ENCODE measurements at regions of chr1 and their contacts with region 1.

Region 1: GRCh38 chr1:153749408-153750005 is 21.7 kb downstream of the INTS3 start:
- DNase-seq: peak; percentile 85
- H3K4me3 Mint-ChIP-seq: no peak overlapping the region
- H3K27ac Mint-ChIP-seq: no peak overlapping the region
- H3K4me1 Mint-ChIP-seq: no peaks in the 10 kb centered on the region
- H3K27me3 Mint-ChIP-seq: no peaks in the 10 kb centered on the region
- CTCF ChIP-seq: peak; percentile 88

Region 2: GRCh38 chr1:153677718-153678505 is 71.6 kb before region 1 on chr1:
- CTCF ChIA-PET with region 1: no interaction called
- intact Hi-C with region 1: loop called (anchors 1 kb)
- DNase-seq: peak; percentile 66
- H3K4me3 Mint-ChIP-seq: peak overlapping the region; percentile 71
- H3K27ac Mint-ChIP-seq: peak overlapping the region; percentile 62
- H3K4me1 Mint-ChIP-seq: peaks cover 25% of the 10 kb centered on the region
- H3K27me3 Mint-ChIP-seq: peaks cover 61% of the 10 kb centered on the region
- CTCF ChIP-seq: peak; percentile 96

Measured in Calu3 (cell line).